WTC11 (cell line): ENCODE measurements at regions of chr2 and their contacts with region 1.

Region 1: DNA sequence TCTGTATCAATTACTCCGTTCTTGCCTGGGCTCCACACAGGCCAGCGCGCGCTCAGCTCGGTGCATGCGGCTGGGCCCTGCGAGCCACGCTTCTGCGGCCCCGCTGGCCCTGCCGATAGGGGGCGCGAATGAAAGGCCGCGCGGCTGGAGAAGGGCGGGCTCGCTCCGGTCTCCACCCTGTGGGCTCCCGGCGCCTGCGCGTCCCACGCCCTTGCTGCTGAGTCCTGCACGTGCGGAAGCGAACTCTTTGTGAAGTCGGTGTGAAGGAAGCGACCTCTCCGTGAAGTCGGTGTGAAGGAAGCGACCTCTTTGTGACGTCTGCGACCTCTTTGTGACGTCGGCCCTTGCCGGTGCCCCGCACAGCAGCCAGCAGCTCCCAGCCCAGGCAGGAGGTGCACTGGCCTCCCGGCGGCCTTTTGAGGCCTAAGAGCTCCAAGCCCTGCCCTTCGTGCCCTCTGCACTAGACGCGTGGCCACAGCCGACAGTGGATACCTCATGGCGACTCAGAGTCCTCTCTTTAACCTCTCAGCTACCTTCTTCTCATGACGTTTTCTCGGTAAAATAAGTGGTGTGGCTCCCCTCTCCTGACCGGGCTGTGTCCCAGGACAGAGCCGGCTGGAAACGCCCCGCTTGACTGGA is 391.9 kb upstream of the RAB6C start:
- DNase-seq: peak; percentile 82
- ATAC-seq: peak; percentile 98
- H3K4me3 Mint-ChIP-seq: no peak overlapping the region; the same call in 1 of the 2 replicates
- H3K27ac Mint-ChIP-seq: no peak overlapping the region
- H3K4me1 Mint-ChIP-seq: peaks cover 2% of the 10 kb centered on the region
- H3K27me3 Mint-ChIP-seq: peaks cover 22% of the 10 kb centered on the region
- CTCF ChIP-seq: peak; percentile 66

Region 2: GRCh38 chr2:129490641-129491040 is 96.9 kb before region 1 on chr2:
- CTCF ChIA-PET with region 1: no interaction called
- POLR2A ChIA-PET with region 1: no interaction called
- DNase-seq: no peak
- ATAC-seq: no peak
- H3K4me3 Mint-ChIP-seq: no peak overlapping the region
- H3K27ac Mint-ChIP-seq: no peak overlapping the region
- H3K4me1 Mint-ChIP-seq: no peaks in the 10 kb centered on the region
- H3K27me3 Mint-ChIP-seq: peaks cover 4% of the 10 kb centered on the region; the same call in 1 of the 2 replicates
- CTCF ChIP-seq: no peak

Region 3: DNA sequence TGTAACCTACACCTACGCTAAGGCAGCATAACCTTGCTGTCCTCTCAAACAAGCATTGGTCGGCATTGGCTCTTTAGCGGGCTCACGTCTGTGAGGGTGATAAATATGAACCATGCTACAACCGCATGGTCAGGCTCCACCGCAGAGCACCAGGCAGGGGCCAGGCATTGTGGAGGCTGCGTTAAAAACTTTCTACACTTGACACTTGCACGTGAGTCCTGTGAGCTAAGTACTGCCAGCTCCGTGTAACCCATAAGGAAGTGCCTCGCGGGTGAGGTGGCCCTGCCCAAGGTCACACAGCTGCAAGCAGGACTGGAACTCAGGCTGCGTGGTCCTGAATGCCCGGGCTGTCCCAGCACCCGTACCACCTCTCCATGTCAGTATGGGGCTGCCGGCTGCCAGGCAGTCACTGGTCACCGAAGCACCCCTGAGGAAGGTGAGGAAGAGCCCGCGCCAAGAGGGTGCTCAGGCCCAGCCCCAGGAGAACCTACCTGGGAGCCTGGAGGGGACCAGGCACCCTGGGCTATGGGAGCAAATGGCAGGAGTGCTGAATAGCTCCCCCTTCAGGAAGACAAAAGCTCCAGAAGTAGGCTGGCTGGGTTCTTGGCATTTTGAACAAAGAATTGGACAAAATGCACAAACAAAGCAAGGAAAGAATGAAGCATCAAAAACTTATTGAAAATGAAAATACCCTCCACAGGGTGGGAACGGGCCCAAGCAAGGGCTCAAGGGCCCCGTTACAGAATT is 120.8 kb after region 1 on chr2:
- CTCF ChIA-PET with region 1: interaction called, 12 read pairs
- POLR2A ChIA-PET with region 1: no interaction called
- DNase-seq: no peak
- ATAC-seq: no peak
- H3K4me3 Mint-ChIP-seq: no peak overlapping the region
- H3K27ac Mint-ChIP-seq: no peak overlapping the region
- H3K4me1 Mint-ChIP-seq: peaks cover 38% of the 10 kb centered on the region
- H3K27me3 Mint-ChIP-seq: no peaks in the 10 kb centered on the region; the same call in 1 of the 2 replicates
- CTCF ChIP-seq: no peak; the same call in 1 of the 2 replicates

Region 4: GRCh38 chr2:129758784-129759471 is 171.4 kb after region 1 on chr2:
- CTCF ChIA-PET with region 1: interaction called, 12 read pairs
- POLR2A ChIA-PET with region 1: no interaction called
- DNase-seq: no peak
- ATAC-seq: no peak
- H3K4me3 Mint-ChIP-seq: peak overlapping the region; percentile 55
- H3K27ac Mint-ChIP-seq: peak overlapping the region; percentile 98; the same call in 1 of the 2 replicates
- H3K4me1 Mint-ChIP-seq: peaks cover 32% of the 10 kb centered on the region
- H3K27me3 Mint-ChIP-seq: peaks cover 6% of the 10 kb centered on the region; the same call in 1 of the 2 replicates
- CTCF ChIP-seq: no peak